GM12878 (cell line): ENCODE measurements at regions of chr2 and their contacts with region 1.

Region 1: GRCh38 chr2:70142590-70143313 is 48.1 kb downstream of the C2orf42 start:
- DNase-seq: peak; percentile 98
- ATAC-seq: peak; percentile 71
- H3K4me3 ChIP-seq: peak overlapping the region; percentile 60
- H3K27ac ChIP-seq: peak overlapping the region; percentile 97
- H3K4me1 ChIP-seq: peaks cover 38% of the 10 kb centered on the region
- H3K27me3 ChIP-seq: no peaks in the 10 kb centered on the region
- CTCF ChIP-seq: peak; percentile 97 to 100 (median 97); a peak in 5 of 6 replicates
- EP300 ChIP-seq: peak; percentile 35 to 94; a peak in 2 of 4 replicates
- POLR2A ChIP-seq: peak; percentile 26; the same call in 1 of the 2 replicates
- RAD21 ChIP-seq: peak; percentile 91

Region 2: DNA sequence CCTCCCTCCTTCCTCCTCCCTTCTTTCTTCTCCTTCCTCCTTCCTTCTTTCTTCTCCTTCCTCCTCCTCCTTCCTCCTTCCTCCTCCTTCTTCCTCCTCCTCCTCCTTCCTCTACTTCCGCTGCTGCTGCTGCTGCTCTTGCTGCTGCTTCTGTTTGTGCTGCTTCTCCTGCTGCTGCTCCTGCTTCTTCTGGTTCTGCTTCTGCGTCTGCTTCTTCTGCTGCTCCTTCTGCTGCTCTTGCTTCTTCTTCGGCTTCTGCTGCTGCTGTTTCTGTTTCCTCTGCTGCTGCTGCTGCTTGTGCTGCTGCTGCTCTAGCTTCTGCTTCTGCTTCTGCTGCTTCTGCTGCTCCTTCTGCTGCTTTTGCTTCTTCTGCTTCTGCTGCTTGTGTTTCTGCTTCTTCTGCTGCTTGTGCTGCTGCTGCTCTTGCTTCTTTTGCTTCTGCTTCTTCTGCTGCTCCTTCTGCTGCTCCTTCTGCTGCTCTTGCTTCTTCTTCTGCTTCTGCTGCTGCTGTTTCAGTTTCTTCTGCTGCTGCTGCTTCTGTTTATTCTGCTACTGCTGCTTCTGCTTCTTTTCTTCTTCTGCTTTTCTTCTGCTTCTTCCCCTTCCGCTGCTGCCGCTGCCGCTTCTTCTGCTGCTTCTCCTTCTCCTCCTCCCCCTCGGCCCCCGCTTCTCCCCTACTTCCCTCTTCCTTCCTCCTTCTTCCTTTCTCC is 240.4 kb before region 1 on chr2:
- CTCF ChIA-PET with region 1: interaction called, 3 read pairs
- POLR2A ChIA-PET with region 1: no interaction called
- RAD21 ChIA-PET with region 1: no interaction called
- SMC1A ChIA-PET with region 1: no interaction called
- in situ Hi-C with region 1: loop called (anchors 5 kb)
- intact Hi-C with region 1: no loop called
- DNase-seq: peak; percentile 21
- ATAC-seq: peak; percentile 67
- H3K4me3 ChIP-seq: peak overlapping the region; percentile 71
- H3K27ac ChIP-seq: peak overlapping the region; percentile 60
- H3K4me1 ChIP-seq: peaks cover 4% of the 10 kb centered on the region; the same call in 1 of the 2 replicates
- H3K27me3 ChIP-seq: no peaks in the 10 kb centered on the region
- CTCF ChIP-seq: no peak
- EP300 ChIP-seq: no peak
- POLR2A ChIP-seq: no peak
- RAD21 ChIP-seq: no peak

Region 3: DNA sequence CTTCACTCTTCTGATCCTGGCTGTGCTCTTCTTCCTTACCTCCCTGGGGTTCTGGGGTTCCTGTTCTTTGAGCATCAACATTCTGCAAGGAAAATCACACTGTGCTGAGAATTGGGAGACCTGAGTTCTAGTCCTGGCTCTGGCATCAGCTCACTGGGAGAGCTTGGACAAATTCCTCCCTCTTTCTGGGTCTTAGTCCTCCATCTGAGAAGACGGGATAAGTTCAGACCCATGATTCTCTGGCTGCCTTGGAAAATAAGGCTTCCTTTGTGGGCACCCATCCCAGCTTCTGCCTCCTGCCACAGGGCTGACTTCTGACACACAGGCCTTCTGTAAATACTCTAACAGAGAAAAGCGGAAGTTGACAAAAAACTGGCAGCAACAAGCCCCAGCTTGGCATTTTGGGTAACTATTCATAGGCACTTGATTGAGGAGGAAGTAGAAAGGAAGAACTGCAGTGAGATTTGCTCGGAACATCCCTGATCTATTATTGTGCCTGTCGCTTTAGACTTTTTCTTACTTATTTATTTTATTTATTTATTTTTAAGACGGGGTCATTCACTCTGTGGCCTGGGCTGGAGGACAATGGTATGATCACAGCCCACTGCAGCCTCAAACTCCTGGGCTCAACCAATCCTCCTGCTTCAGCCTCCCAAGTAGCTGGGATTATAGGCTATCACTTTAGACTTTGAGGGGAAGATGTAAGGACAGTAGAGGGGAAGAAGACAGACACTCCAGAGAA is 47.6 kb before region 1 on chr2:
- CTCF ChIA-PET with region 1: interaction called, 3 read pairs
- POLR2A ChIA-PET with region 1: interaction called, 10 read pairs
- RAD21 ChIA-PET with region 1: interaction called, 181 read pairs
- SMC1A ChIA-PET with region 1: interaction called, 5 read pairs
- in situ Hi-C with region 1: loop called (anchors 5 kb)
- intact Hi-C with region 1: no loop called
- DNase-seq: no peak
- ATAC-seq: peak; percentile 90
- H3K4me3 ChIP-seq: 0 out of 2 replicates have a peak overlapping the region, but pooled peaks have one; percentile 20
- H3K27ac ChIP-seq: peak overlapping the region; percentile 89
- H3K4me1 ChIP-seq: peaks cover 17% of the 10 kb centered on the region
- H3K27me3 ChIP-seq: no peaks in the 10 kb centered on the region
- CTCF ChIP-seq: no peak
- EP300 ChIP-seq: no peak
- POLR2A ChIP-seq: peak; percentile 51; the same call in 1 of the 2 replicates
- RAD21 ChIP-seq: no peak; the same call in 1 of the 2 replicates

Region 4: GRCh38 chr2:70124983-70125480 is 17.7 kb before region 1 on chr2:
- CTCF ChIA-PET with region 1: interaction called, 12 read pairs
- POLR2A ChIA-PET with region 1: interaction called, 263 read pairs
- RAD21 ChIA-PET with region 1: interaction called, 41 read pairs
- SMC1A ChIA-PET with region 1: interaction called, 311 read pairs
- in situ Hi-C with region 1: no loop called
- intact Hi-C with region 1: loop called (anchors 1 kb)
- DNase-seq: no peak
- ATAC-seq: peak; percentile 61
- H3K4me3 ChIP-seq: peak overlapping the region; percentile 67
- H3K27ac ChIP-seq: peak overlapping the region; percentile 95
- H3K4me1 ChIP-seq: peaks cover 62% of the 10 kb centered on the region
- H3K27me3 ChIP-seq: no peaks in the 10 kb centered on the region
- CTCF ChIP-seq: no peak
- EP300 ChIP-seq: no peak; a peak in 1 of 4 replicates
- POLR2A ChIP-seq: peak; percentile 88
- RAD21 ChIP-seq: no peak

Region 5: GRCh38 chr2:70181363-70181956 is 38.7 kb after region 1 on chr2:
- CTCF ChIA-PET with region 1: no interaction called
- POLR2A ChIA-PET with region 1: interaction called, 4 read pairs
- RAD21 ChIA-PET with region 1: interaction called, 12 read pairs
- SMC1A ChIA-PET with region 1: interaction called, 3 read pairs
- in situ Hi-C with region 1: no loop called
- intact Hi-C with region 1: loop called (anchors 1 kb)
- DNase-seq: peak; percentile 88
- ATAC-seq: peak; percentile 94
- H3K4me3 ChIP-seq: peak overlapping the region; percentile 18; the same call in 1 of the 2 replicates
- H3K27ac ChIP-seq: peak overlapping the region; percentile 90
- H3K4me1 ChIP-seq: peaks cover 21% of the 10 kb centered on the region
- H3K27me3 ChIP-seq: no peaks in the 10 kb centered on the region
- CTCF ChIP-seq: no peak
- EP300 ChIP-seq: 0 out of 4 replicates have a peak, but pooled peaks of 1 of the 2 experiments have one; percentile 26
- POLR2A ChIP-seq: peak; percentile 90
- RAD21 ChIP-seq: no peak

Region 6: DNA sequence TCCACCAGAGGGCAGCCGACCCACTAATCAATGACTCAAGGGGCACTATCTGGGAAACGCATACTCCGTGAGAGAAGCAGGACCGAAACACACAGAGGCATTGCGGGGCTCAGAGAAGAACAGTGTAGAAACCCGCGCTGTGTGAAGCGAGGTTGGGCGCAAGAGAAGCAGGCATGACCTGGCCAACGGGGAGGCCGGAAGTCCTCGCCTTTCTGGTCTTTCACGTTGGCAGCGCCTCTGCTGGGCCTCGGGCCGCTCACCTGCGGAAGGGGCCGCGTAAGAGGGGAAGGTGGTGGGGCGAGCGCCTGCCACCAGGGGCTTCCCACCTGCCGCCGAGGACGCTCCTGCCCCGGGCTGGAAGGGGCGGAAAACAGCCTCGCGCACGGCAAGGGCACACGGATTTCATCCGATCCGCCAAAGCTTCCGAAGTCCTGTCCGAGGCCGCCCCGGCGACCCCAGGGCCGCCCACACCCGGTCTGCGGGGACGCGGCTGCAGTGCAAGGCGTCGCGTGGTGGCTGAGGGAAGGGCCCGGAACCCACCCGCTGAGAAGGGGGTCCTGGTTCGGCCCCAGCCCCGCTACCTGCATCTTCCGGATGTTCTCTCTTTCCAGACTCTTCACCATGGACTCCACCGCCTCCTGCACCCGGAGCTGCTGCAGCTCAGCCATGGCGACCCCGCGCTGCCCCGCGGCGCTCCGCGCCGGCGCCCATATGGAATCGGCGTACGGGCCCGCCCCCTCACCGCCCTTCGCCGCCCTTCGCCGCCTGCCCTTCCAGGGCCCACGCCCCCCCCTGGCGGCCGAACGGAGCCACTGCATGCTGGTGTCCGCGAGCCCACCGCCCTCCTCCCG is 158.8 kb after region 1 on chr2 and contains the start of gene FAM136A:
- CTCF ChIA-PET with region 1: interaction called, 6 read pairs
- POLR2A ChIA-PET with region 1: no interaction called
- RAD21 ChIA-PET with region 1: interaction called, 5 read pairs
- SMC1A ChIA-PET with region 1: no interaction called
- in situ Hi-C with region 1: no loop called
- intact Hi-C with region 1: loop called (anchors 5 kb)
- DNase-seq: peak; percentile 40
- ATAC-seq: peak; percentile 93
- H3K4me3 ChIP-seq: peak within 1 kb of the TSS; percentile 84
- H3K27ac ChIP-seq: peak within 1 kb of the TSS; percentile 85
- H3K4me1 ChIP-seq: peaks cover 3% of the 10 kb centered on the region; the same call in 1 of the 2 replicates
- H3K27me3 ChIP-seq: no peaks in the 10 kb centered on the region
- CTCF ChIP-seq: peak; percentile 88 to 97 (median 95)
- EP300 ChIP-seq: no peak
- POLR2A ChIP-seq: peak; percentile 82
- RAD21 ChIP-seq: peak; percentile 70
- polyA plus RNA-seq, gene FAM136A: 128 to 134 TPM

Region 7: GRCh38 chr2:70477441-70477844 is 334.7 kb after region 1 on chr2:
- CTCF ChIA-PET with region 1: no interaction called
- POLR2A ChIA-PET with region 1: no interaction called
- RAD21 ChIA-PET with region 1: no interaction called
- SMC1A ChIA-PET with region 1: no interaction called
- in situ Hi-C with region 1: no loop called
- intact Hi-C with region 1: no loop called
- DNase-seq: no peak
- ATAC-seq: no peak
- H3K4me3 ChIP-seq: no peak overlapping the region
- H3K27ac ChIP-seq: no peak overlapping the region
- H3K4me1 ChIP-seq: peaks cover 10% of the 10 kb centered on the region
- H3K27me3 ChIP-seq: peaks cover 0 to 4% of the 10 kb centered on the region in 2 experiments; a peak in 2 of 4 replicates
- CTCF ChIP-seq: no peak
- EP300 ChIP-seq: no peak
- POLR2A ChIP-seq: no peak
- RAD21 ChIP-seq: no peak

Region 8: GRCh38 chr2:70553584-70554337 is 411.0 kb after region 1 on chr2 and contains the start of gene TGFA:
- CTCF ChIA-PET with region 1: no interaction called
- POLR2A ChIA-PET with region 1: no interaction called
- RAD21 ChIA-PET with region 1: no interaction called
- SMC1A ChIA-PET with region 1: no interaction called
- in situ Hi-C with region 1: no loop called
- intact Hi-C with region 1: no loop called
- DNase-seq: no peak
- ATAC-seq: peak; percentile 92
- H3K4me3 ChIP-seq: no peak within 1 kb of the TSS; the same call in 1 of the 2 replicates
- H3K27ac ChIP-seq: no peak within 1 kb of the TSS
- H3K4me1 ChIP-seq: no peaks in the 10 kb centered on the region
- H3K27me3 ChIP-seq: peaks cover 11 to 16% of the 10 kb centered on the region in 2 experiments
- CTCF ChIP-seq: peak; percentile 40 to 76 (median 58); a peak in 5 of 6 replicates
- EP300 ChIP-seq: no peak
- POLR2A ChIP-seq: no peak
- RAD21 ChIP-seq: 0 out of 2 replicates have a peak, but pooled peaks have one; percentile 13
- polyA plus RNA-seq, gene TGFA: not detected